ENCODE measurements at regions of chr2 and their contacts with region 1.

Region 1: GRCh38 chr2:127591221-127591923 is 54.6 kb upstream of the GPR17 start:
- DNase-seq: peak; percentile 72
- ATAC-seq: peak; percentile 99
- H3K4me3 Mint-ChIP-seq: no peak overlapping the region
- H3K27ac Mint-ChIP-seq: no peak overlapping the region
- H3K4me1 Mint-ChIP-seq: peaks cover 31% of the 10 kb centered on the region
- H3K27me3 Mint-ChIP-seq: no peaks in the 10 kb centered on the region
- CTCF ChIP-seq: no peak

Region 2: DNA sequence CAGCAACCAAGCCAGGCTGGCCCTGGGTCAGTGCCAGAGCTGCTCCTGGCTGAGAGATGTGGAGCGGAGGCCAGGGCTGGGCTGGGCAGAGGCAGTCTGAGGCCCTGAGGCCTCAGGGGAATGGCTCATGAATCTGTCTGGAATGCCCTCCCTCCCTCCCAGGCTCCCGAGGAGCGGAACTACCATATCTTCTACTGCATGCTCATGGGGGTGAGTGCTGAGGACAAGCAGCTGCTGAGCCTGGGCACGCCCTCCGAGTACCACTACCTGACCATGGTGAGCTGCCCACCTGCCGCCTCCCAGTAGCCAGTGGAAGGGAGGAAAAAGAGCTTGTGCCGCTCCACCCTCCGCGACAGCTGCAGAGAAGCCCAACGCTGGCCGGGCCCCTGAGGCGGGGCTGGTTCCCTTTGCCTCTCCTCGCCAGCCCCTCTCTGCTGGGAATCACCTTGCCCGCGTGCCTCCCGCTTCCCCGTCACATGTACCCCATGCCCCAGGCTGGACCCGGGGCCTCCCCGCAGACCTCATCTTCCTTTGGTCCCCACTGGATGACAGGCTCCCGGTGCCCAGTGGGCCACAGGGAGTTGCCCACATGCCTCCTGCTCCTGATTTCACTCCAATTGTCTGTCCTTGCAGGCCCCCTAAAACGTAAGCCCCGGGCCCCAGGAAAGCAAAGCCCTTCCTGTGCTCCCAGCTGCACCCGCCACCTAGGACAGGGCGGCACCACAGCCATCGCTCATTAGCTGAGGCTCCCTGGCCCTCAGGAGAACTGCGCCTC is 14.8 kb before region 1 on chr2:
- CTCF ChIA-PET with region 1: interaction called, 16 read pairs
- POLR2A ChIA-PET with region 1: interaction called, 3 read pairs
- intact Hi-C with region 1: no loop called
- DNase-seq: no peak
- ATAC-seq: no peak
- H3K4me3 Mint-ChIP-seq: peak overlapping the region; percentile 50
- H3K27ac Mint-ChIP-seq: no peak overlapping the region
- H3K4me1 Mint-ChIP-seq: peaks cover 64% of the 10 kb centered on the region
- H3K27me3 Mint-ChIP-seq: no peaks in the 10 kb centered on the region
- CTCF ChIP-seq: no peak

Region 3: GRCh38 chr2:127637725-127638252 is 46.4 kb after region 1 on chr2:
- CTCF ChIA-PET with region 1: interaction called, 41 read pairs
- POLR2A ChIA-PET with region 1: interaction called, 7 read pairs
- intact Hi-C with region 1: loop called (anchors 2 kb)
- DNase-seq: no peak
- ATAC-seq: no peak
- H3K4me3 Mint-ChIP-seq: peak overlapping the region; percentile 28
- H3K27ac Mint-ChIP-seq: peak overlapping the region; percentile 93
- H3K4me1 Mint-ChIP-seq: peaks cover 92% of the 10 kb centered on the region
- H3K27me3 Mint-ChIP-seq: no peaks in the 10 kb centered on the region
- CTCF ChIP-seq: no peak

Region 4: DNA sequence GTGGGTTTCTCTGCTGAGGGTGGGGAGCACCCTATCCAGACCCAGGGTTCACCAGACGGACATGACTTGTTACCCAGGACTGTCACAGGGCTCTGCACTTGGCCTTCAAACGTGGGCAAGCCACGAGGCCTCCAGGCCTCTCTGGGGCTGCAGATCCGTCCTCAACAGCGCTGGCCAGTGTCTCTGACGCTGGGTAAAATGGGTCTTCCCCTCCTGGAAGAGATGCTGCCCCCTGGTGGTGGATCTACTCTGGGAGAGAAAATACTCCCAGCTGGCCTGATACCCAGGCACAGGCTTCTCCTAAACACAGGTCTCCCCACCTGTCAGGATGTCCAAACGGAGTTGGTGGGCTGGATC is 58.3 kb after region 1 on chr2:
- CTCF ChIA-PET with region 1: interaction called, 289 read pairs
- POLR2A ChIA-PET with region 1: interaction called, 34 read pairs
- intact Hi-C with region 1: loop called (anchors 1 kb)
- DNase-seq: peak; percentile 68
- ATAC-seq: peak; percentile 80
- H3K4me3 Mint-ChIP-seq: peak overlapping the region; percentile 52
- H3K27ac Mint-ChIP-seq: no peak overlapping the region
- H3K4me1 Mint-ChIP-seq: peaks cover 63% of the 10 kb centered on the region
- H3K27me3 Mint-ChIP-seq: no peaks in the 10 kb centered on the region
- CTCF ChIP-seq: no peak

Region 5: DNA sequence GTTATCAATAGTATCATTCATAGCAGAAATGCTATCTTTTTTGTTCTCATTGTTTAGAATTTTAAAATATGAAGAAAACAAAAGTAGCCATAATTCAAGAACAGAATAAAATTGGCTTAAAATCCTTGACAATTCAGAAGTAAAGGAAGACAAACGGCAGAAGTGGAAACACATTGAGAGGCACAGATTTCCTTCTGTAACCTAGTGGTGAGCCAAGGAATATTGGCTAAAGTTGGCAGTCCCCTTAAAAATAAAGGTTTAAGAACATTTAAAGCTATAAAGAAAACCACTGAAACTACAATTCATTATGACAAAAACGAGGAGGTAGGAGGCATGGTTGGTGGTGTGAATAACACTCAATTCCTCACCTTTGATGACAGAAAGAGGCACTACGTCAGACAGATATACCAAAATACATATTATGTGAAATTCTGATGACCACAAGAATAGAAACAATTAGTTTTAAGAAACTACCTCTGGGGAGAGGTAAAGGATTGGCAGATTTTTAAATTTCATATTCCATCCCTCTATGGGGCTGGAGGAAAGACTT is 152.2 kb after region 1 on chr2:
- CTCF ChIA-PET with region 1: interaction called, 11 read pairs
- POLR2A ChIA-PET with region 1: no interaction called
- intact Hi-C with region 1: no loop called
- DNase-seq: no peak
- ATAC-seq: no peak
- H3K4me3 Mint-ChIP-seq: no peak overlapping the region
- H3K27ac Mint-ChIP-seq: no peak overlapping the region
- H3K4me1 Mint-ChIP-seq: peaks cover 8% of the 10 kb centered on the region
- H3K27me3 Mint-ChIP-seq: no peaks in the 10 kb centered on the region
- CTCF ChIP-seq: no peak

Region 6: GRCh38 chr2:127857265-127857808 is 266.0 kb after region 1 on chr2:
- CTCF ChIA-PET with region 1: interaction called, 6 read pairs
- POLR2A ChIA-PET with region 1: interaction called, 5 read pairs
- intact Hi-C with region 1: loop called (anchors 10 kb)
- DNase-seq: no peak
- ATAC-seq: no peak
- H3K4me3 Mint-ChIP-seq: peak overlapping the region; percentile 88
- H3K27ac Mint-ChIP-seq: peak overlapping the region; percentile 64
- H3K4me1 Mint-ChIP-seq: peaks cover 42% of the 10 kb centered on the region
- H3K27me3 Mint-ChIP-seq: no peaks in the 10 kb centered on the region
- CTCF ChIP-seq: no peak